GM12878 (cell line): ENCODE measurements at regions of chr3 and their contacts with region 1.

Region 1: DNA sequence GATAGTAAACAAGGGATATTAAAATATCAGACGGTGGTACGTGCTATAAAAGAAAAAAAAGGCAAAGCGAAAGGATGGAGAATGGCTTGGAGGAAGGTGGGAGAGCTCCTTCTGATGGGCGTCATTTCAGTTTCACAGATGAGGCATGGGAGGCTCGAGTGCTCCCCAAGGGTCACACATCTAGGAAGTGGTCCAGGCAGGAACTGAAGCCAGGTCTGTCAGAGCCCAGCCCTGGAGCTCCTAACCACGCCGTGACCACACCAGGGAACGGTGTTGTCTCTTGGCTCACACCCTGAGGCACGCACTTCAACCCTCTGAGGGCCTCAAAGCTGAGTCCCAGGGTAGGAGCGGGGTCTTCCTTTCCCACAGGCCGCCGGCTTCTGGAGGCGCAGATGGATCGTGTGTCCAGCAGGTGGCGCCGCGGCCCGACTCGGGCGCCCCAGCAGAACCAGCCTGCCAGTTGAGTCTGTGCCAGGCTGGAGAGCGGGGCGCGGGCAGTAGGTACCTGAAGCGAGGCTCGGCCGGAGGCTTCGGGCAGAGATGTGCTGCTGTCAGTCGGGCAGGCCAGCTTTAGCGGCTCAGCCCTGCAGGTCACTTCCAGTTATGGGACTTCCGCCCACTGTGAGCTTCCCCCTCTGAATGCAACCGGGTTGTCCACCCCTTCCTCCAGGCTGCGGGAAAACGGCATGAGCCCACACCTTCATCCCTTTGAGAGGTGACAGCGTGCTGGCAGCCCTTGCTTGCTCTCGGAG is 68.1 kb downstream of the SLC6A1 start:
- DNase-seq: no peak
- ATAC-seq: peak; percentile 91
- H3K4me3 ChIP-seq: no peak overlapping the region
- H3K27ac ChIP-seq: no peak overlapping the region
- H3K4me1 ChIP-seq: no peaks in the 10 kb centered on the region
- H3K27me3 ChIP-seq: peaks cover 0 to 3% of the 10 kb centered on the region in 2 experiments; a peak in 2 of 4 replicates
- CTCF ChIP-seq: peak; percentile 59 to 71 (median 66)
- EP300 ChIP-seq: no peak
- POLR2A ChIP-seq: no peak
- RAD21 ChIP-seq: peak; percentile 41

Region 2: DNA sequence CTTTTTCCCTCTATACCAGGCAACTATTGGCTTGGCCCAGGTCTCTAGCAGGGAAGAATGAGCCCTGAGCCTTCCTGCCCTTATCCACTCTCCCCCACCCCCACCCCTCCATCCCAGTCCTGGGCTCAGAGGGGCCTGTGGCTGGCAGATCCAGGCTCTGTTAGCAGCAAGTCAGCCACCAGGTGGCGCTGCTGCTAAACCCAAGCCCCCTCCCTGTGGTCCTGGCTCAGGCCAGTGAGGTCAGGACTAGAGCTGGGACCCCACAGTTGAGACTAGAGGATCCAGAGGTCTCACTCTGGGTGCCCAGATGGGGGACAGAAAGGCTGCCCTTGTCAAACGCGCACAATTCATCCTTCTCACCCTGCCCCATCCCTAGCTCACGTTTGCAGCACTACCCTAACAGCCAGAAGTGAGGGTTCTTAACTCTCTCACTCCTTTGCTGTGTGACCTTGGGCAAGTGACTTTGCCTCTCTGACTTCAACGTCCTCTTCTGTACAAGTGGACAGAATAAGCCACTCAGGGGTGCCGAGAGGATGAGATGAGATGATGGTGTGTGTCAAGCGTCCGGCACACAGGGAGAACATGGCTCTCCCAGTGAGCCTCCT is 114.9 kb before region 1 on chr3:
- CTCF ChIA-PET with region 1: interaction called, 14 read pairs
- POLR2A ChIA-PET with region 1: no interaction called
- RAD21 ChIA-PET with region 1: no interaction called
- SMC1A ChIA-PET with region 1: interaction called, 3 read pairs
- in situ Hi-C with region 1: no loop called
- intact Hi-C with region 1: loop called (anchors 1 kb)
- DNase-seq: no peak
- ATAC-seq: peak; percentile 98
- H3K4me3 ChIP-seq: no peak overlapping the region
- H3K27ac ChIP-seq: no peak overlapping the region
- H3K4me1 ChIP-seq: no peaks in the 10 kb centered on the region
- H3K27me3 ChIP-seq: no peaks in the 10 kb centered on the region
- CTCF ChIP-seq: peak; percentile 64 to 86 (median 70)
- EP300 ChIP-seq: no peak
- POLR2A ChIP-seq: no peak
- RAD21 ChIP-seq: peak; percentile 48

Region 3: DNA sequence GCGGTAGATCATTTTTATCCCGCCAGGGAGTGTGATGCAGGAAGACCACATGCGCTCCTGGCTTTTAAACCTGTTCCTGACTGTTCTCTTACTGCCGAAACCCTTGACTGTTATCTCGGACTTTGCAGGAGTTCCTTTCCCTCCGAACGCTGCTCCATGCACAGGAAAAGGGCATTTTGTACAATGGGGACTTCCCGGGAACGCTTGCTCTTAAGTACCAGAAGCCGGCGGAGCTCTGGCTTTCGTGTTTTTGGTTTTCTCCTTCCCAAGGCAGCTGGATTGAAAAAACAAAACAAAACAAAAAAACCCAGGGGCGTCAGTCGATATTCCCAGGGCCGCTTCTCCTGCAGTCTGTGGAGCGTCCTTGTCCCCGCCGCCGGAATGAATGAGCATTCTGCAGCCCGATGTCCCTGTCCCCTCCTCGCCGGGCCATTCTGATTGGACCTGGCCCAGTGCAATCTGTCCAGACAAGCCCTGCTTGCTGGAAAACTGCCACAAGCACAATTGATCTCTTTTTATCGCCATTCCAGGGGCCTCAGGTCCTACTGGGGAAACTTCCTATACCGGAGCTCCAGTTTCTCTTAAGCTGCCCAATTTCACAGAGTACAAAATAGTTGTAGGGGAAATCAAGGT is 23.3 kb before region 1 on chr3:
- CTCF ChIA-PET with region 1: interaction called, 14 read pairs
- POLR2A ChIA-PET with region 1: no interaction called
- RAD21 ChIA-PET with region 1: interaction called, 3 read pairs
- SMC1A ChIA-PET with region 1: interaction called, 3 read pairs
- in situ Hi-C with region 1: no loop called
- intact Hi-C with region 1: no loop called
- DNase-seq: no peak
- ATAC-seq: no peak
- H3K4me3 ChIP-seq: no peak overlapping the region
- H3K27ac ChIP-seq: no peak overlapping the region
- H3K4me1 ChIP-seq: no peaks in the 10 kb centered on the region
- H3K27me3 ChIP-seq: peaks cover 0 to 2% of the 10 kb centered on the region in 2 experiments; a peak in 3 of 4 replicates
- CTCF ChIP-seq: no peak
- EP300 ChIP-seq: no peak
- POLR2A ChIP-seq: no peak
- RAD21 ChIP-seq: no peak

Region 4: DNA sequence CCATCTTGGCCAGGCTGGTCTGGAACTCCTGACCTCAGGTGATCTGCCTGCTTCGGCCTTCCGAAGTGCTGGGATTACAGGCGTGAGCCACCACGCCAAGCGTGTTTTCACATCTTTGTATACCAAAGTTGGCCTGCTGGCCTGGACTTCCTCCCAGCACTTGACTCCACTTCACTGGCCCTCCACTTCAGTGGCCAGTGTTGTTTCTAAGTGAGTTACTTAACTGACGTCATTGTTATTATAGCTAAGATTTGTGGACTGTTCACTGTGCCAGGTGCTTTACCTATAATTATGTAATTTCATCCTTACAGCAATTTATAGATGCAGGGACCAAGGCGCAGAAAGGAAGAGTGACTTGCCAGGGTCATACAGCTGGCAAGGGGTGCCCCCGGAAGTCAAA is 145.6 kb after region 1 on chr3:
- CTCF ChIA-PET with region 1: interaction called, 4 read pairs
- POLR2A ChIA-PET with region 1: no interaction called
- RAD21 ChIA-PET with region 1: no interaction called
- SMC1A ChIA-PET with region 1: no interaction called
- in situ Hi-C with region 1: no loop called
- intact Hi-C with region 1: loop called (anchors 1 kb)
- DNase-seq: no peak
- ATAC-seq: no peak
- H3K4me3 ChIP-seq: no peak overlapping the region
- H3K27ac ChIP-seq: no peak overlapping the region
- H3K4me1 ChIP-seq: no peaks in the 10 kb centered on the region
- H3K27me3 ChIP-seq: peaks cover 0 to 2% of the 10 kb centered on the region in 2 experiments; a peak in 1 of 4 replicates
- CTCF ChIP-seq: no peak
- EP300 ChIP-seq: no peak
- POLR2A ChIP-seq: no peak
- RAD21 ChIP-seq: no peak